ENCODE measurements at regions of chr7 and their contacts with region 1.

Region 1: GRCh38 chr7:7707806-7708205 is 10.6 kb downstream of the RPA3 start:
- DNase-seq: no peak
- ATAC-seq: no peak
- H3K4me3 Mint-ChIP-seq: no peak overlapping the region
- H3K27ac Mint-ChIP-seq: no peak overlapping the region
- H3K4me1 Mint-ChIP-seq: peaks cover 32% of the 10 kb centered on the region
- H3K27me3 Mint-ChIP-seq: no peaks in the 10 kb centered on the region
- CTCF ChIP-seq: no peak

Region 2: DNA sequence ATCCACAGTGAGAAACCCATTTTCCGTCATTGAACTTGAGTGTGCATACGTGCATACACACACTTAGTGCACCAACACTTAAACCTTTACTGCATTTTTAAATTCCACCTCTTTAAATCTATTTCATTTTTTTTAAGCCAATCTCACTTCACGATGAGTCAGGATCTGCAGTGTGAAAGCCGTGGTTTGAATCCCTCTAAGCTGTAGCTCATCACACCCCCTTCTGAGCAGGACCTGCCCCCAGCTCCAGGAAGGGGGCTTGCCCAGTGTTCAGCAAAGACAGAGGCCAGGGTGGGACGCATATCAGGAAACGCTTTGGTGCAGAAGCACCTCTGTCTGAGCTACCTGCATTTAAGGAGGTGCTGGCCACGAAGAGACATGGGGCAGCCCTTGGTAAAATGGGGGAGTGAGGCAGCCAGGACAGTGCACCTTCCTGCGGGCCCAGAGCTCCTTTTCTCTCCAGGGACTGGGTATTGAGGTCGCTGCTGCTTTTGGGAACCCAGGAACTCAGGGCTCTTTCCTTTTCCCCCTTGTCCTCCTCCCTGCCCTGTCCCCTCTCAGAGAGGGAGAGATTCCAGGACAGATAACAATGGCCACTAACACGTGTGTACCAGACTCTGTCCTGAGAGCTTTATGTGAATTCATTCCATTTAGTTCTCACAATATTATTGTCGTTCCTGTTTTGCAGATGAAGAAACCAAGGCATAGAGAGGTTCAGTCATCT is 1049.0 kb before region 1 on chr7:
- CTCF ChIA-PET with region 1: no interaction called
- POLR2A ChIA-PET with region 1: no interaction called
- intact Hi-C with region 1: no loop called
- DNase-seq: no peak
- ATAC-seq: no peak
- H3K4me3 Mint-ChIP-seq: no peak overlapping the region
- H3K27ac Mint-ChIP-seq: no peak overlapping the region
- H3K4me1 Mint-ChIP-seq: no peaks in the 10 kb centered on the region
- H3K27me3 Mint-ChIP-seq: peaks cover 9% of the 10 kb centered on the region
- CTCF ChIP-seq: no peak

Region 3: GRCh38 chr7:7032210-7032609 is 675.6 kb before region 1 on chr7:
- CTCF ChIA-PET with region 1: no interaction called
- POLR2A ChIA-PET with region 1: no interaction called
- intact Hi-C with region 1: no loop called
- DNase-seq: no peak
- ATAC-seq: no peak
- H3K4me3 Mint-ChIP-seq: no peak overlapping the region
- H3K27ac Mint-ChIP-seq: no peak overlapping the region
- H3K4me1 Mint-ChIP-seq: no peaks in the 10 kb centered on the region
- H3K27me3 Mint-ChIP-seq: peaks cover 42% of the 10 kb centered on the region
- CTCF ChIP-seq: no peak

Region 4: DNA sequence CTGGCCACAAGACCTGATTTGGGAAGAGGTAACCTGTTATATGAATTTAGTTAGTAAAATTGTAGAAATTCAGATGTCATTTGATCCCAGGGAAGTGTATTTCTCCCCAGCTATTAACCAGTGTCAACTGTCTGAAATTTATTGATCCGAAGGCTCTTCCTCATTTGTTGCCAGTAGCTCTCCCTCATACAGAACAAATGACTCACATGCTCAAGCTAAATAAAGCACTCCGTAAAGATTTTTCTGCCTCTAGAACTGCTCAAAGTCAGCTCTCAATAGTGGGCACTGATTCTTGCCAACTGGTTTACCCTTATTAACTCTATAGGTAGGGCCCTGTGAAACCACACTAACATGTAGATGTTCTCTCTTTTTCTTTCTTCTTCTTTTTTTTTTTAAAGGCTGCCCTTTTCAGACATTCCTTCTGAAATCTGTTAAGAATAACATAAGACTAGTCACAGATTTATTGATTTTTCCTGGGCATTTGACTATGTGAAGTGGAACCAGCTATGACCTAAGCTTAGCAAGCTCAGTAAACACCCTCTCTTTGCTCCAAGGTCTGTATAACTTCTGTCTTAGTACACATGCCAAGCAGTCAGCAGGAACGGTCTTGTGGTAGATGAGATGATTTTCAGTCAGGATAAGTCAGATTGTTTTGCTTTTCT is 11.2 kb before region 1 on chr7:
- CTCF ChIA-PET with region 1: no interaction called
- POLR2A ChIA-PET with region 1: no interaction called
- intact Hi-C with region 1: loop called (anchors 2 kb)
- DNase-seq: no peak
- ATAC-seq: no peak
- H3K4me3 Mint-ChIP-seq: no peak overlapping the region
- H3K27ac Mint-ChIP-seq: no peak overlapping the region
- H3K4me1 Mint-ChIP-seq: peaks cover 27% of the 10 kb centered on the region
- H3K27me3 Mint-ChIP-seq: no peaks in the 10 kb centered on the region
- CTCF ChIP-seq: no peak

Region 5: DNA sequence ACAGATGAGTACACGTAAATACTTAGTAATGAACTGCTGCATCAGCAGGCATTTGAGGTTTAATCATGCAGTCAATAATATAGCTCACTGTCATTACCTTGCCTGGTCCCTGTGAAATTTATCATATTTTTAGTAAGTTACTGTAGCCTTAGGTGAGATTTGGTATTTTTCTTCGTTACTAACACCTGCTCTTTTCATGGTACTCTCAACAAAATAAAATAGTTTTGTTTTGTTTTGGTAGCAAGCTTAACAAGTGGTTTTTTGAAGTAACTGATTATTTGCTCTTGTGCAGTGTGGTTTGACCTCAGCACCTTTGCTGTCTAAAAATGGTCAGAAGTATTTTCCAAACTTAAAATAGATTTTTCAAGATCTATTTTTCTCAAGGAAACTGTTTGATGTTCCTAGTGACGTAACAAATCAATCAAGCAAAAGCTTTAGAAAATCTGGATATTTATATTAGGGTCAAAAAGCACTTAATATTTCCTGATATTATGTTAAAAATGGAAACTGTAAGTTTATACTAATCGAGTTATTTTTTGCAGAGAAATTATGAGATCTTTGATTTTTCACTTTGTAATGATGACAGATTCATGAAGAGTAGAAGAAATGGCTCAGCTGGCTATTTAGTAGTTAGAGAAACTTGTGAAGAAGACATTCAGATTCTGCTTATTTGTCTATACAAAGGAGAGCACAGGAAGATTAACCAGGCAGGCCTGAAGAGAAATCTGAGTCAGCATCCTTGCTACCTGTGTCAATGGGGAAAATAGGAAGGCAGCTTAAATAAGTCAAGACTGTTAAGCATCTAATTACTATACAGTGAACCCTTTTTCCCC is 31.6 kb after region 1 on chr7:
- CTCF ChIA-PET with region 1: no interaction called
- POLR2A ChIA-PET with region 1: no interaction called
- intact Hi-C with region 1: loop called (anchors 5 kb)
- DNase-seq: no peak
- ATAC-seq: no peak
- H3K4me3 Mint-ChIP-seq: no peak overlapping the region
- H3K27ac Mint-ChIP-seq: no peak overlapping the region
- H3K4me1 Mint-ChIP-seq: peaks cover 14% of the 10 kb centered on the region
- H3K27me3 Mint-ChIP-seq: no peaks in the 10 kb centered on the region
- CTCF ChIP-seq: no peak

Measured in activated B cell treated with CpG ODN at 0.5 μM for 24 hours (primary cell).